Heart left ventricle (tissue), 16 donors: ENCODE measurements at regions of chr10 and their contacts with region 1.

Region 1: DNA sequence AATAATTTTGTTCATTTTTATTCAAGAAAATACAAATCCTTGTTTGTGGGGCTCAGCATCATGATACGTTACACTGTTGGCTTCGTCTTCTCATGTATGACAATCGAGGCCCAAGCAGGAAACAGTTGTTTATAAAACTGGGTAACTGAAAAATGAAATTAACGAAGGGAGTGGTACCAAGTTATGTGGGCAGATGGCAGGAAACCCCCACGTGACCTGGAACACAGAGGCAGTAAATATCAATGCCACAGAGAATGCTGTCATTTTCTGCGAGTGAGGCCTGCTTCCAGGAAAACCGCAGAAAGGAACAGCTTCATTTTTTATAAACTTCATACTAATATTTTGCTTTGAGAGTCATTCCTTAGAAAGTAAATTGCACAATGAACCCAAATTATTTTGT is 201.0 kb upstream of the ADARB2 start:
- DNase-seq: no peak
- ATAC-seq: no peak
- H3K4me3 ChIP-seq: no peak overlapping the region
- H3K27ac ChIP-seq: peak overlapping the region in 1 of 12 donors; percentile 49
- H3K4me1 ChIP-seq: no peaks in the 10 kb centered on the region
- H3K27me3 ChIP-seq: peaks cover 0 to 6% (median 0%) of the 10 kb centered on the region in 9 donors
- CTCF ChIP-seq: no peak
- POLR2A ChIP-seq: no peak

Region 2: DNA sequence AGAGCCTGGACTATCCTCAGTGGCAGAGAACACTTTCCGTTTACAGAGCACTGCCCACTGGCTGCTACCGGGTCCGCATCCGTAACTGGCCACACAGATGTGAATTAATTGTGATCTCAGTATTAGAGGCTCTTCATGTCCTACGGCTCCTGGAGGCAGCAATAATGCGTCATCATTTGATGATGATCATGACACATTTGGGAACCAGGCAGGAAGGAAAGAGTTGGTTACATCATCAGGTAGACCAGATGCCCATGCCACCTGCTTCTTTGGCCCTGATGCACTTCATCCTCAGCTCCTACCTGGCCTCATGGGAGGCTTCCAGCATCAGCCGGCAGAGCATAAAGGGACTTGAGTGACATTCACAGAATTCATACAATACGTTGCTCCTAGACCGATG is 148.1 kb before region 1 on chr10:
- intact Hi-C with region 1: loop called in 1 of 10 experiments (anchors 10 kb)
- DNase-seq: no peak
- ATAC-seq: no peak
- H3K4me3 ChIP-seq: no peak overlapping the region
- H3K27ac ChIP-seq: no peak overlapping the region
- H3K4me1 ChIP-seq: no peaks in the 10 kb centered on the region
- H3K27me3 ChIP-seq: peaks cover 0 to 5% (median 0%) of the 10 kb centered on the region in 9 donors
- CTCF ChIP-seq: no peak
- POLR2A ChIP-seq: no peak

Region 3: GRCh38 chr10:2460846-2461245 is 522.5 kb after region 1 on chr10:
- intact Hi-C with region 1: no loop called
- DNase-seq: no peak
- ATAC-seq: no peak
- H3K4me3 ChIP-seq: no peak overlapping the region
- H3K27ac ChIP-seq: no peak overlapping the region
- H3K4me1 ChIP-seq: no peaks in the 10 kb centered on the region
- H3K27me3 ChIP-seq: no peaks in the 10 kb centered on the region
- CTCF ChIP-seq: no peak
- POLR2A ChIP-seq: no peak